ENCODE measurements at regions of chr10 and their contacts with region 1.

Region 1: GRCh38 chr10:118754720-118755480 is at the start of gene CACUL1:
- DNase-seq: peak; percentile 100
- H3K4me3 Mint-ChIP-seq: peak within 1 kb of the TSS; percentile 87
- H3K27ac Mint-ChIP-seq: peak within 1 kb of the TSS; percentile 86
- H3K4me1 Mint-ChIP-seq: peaks cover 26% of the 10 kb centered on the region
- H3K27me3 Mint-ChIP-seq: peaks cover 15% of the 10 kb centered on the region
- total RNA-seq, gene CACUL1: 30.1 and 32.7 TPM in 2 replicates

Region 2: GRCh38 chr10:117653170-117653515 is 1101.8 kb before region 1 on chr10:
- intact Hi-C with region 1: loop called (anchors 2 kb)
- DNase-seq: peak; percentile 65
- H3K4me3 Mint-ChIP-seq: peak overlapping the region; percentile 11
- H3K27ac Mint-ChIP-seq: peak overlapping the region; percentile 83
- H3K4me1 Mint-ChIP-seq: peaks cover 38% of the 10 kb centered on the region
- H3K27me3 Mint-ChIP-seq: peaks cover 3% of the 10 kb centered on the region

Region 3: DNA sequence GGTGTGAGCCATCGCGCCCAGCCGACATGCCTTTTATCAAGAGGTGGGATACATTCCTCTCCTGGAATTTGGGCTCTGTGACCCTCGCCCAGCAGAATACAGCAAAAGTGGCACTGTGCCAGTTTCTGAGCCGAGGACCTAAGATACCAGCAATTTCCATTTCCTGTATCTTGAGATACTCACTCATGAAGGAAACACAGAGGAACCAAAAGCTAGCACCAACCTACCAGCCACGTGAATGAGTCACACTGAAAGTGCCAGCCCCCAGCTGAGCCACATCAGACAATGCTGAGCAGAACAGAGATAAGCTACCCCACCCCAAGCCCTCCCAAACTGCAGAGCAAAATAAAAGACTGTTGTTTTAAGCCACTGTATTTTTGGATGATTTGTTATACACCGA is 56.5 kb before region 1 on chr10:
- intact Hi-C with region 1: loop called (anchors 1 kb)
- DNase-seq: peak; percentile 74
- H3K4me3 Mint-ChIP-seq: peak overlapping the region; percentile 34
- H3K27ac Mint-ChIP-seq: no peak overlapping the region
- H3K4me1 Mint-ChIP-seq: peaks cover 33% of the 10 kb centered on the region
- H3K27me3 Mint-ChIP-seq: no peaks in the 10 kb centered on the region

Region 4: GRCh38 chr10:118927321-118927720 is 172.4 kb after region 1 on chr10:
- intact Hi-C with region 1: no loop called
- DNase-seq: no peak
- H3K4me3 Mint-ChIP-seq: no peak overlapping the region
- H3K27ac Mint-ChIP-seq: no peak overlapping the region
- H3K4me1 Mint-ChIP-seq: no peaks in the 10 kb centered on the region
- H3K27me3 Mint-ChIP-seq: peaks cover 15% of the 10 kb centered on the region

Region 5: DNA sequence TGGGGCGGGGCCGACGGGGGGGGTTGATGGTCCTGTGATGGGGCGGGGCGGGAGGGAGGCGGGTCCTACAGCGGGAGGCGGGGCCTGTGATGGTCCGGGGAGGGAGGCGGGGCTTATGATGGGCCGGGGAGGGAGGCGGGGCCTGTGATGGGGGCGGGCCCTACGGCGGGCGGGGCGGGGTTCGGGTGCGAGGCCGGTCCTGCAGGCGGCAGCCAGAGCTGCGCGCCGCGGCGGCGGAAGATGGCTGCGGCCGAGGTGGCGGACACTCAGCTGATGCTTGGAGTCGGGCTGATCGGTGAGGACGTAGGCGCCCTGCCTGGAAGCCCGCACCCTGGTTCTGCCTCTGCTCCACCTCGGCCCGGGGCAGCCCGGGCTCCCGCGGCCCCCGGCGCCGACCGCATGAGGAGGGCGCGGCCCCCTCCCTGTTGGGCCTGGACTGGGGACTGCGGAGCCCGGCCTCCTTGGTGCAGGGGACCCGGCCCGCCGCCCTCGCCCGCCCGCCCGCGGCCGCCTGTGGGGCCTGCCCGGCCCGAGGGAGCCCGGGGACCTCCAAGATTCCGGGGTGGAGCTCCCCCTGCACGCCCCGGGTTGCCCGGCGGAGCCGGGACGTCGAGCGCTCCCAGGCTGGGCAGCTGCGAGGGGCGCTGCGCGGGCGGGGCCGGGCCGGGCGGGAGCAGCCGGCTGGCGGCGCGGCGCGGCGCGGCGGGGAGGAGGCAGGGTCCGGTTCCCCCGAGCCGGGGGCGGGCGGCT is 349.2 kb after region 1 on chr10 and contains the start of gene DENND10:
- intact Hi-C with region 1: loop called (anchors 5 kb)
- DNase-seq: peak; percentile 68
- H3K4me3 Mint-ChIP-seq: peak within 1 kb of the TSS; percentile 87
- H3K27ac Mint-ChIP-seq: peak within 1 kb of the TSS; percentile 58
- H3K4me1 Mint-ChIP-seq: peaks cover 22% of the 10 kb centered on the region
- H3K27me3 Mint-ChIP-seq: no peaks in the 10 kb centered on the region
- total RNA-seq, gene DENND10: 20.1 and 25.4 TPM in 2 replicates

Region 6: DNA sequence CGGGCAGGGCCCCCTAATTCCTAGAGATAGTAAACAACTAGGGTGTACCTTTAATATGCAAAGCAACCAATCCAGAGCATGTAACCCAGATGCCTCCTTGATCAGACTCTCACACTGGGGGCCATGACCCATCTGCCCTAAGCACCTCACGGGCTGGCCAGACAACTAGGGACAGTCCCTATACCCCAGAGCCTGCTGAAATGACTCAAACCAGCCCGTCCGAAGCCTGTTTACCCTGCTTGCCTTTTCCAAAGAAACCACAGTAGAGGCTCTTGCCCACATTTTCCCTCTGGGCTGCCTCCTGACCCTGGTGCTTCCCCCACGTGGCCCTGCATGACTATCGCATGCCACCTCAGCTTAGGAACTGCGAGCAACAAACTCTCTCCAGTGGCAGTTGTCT is 741.4 kb after region 1 on chr10:
- intact Hi-C with region 1: loop called (anchors 10 kb)
- DNase-seq: no peak
- H3K4me3 Mint-ChIP-seq: peak overlapping the region; percentile 64
- H3K27ac Mint-ChIP-seq: peak overlapping the region; percentile 87
- H3K4me1 Mint-ChIP-seq: peaks cover 79% of the 10 kb centered on the region
- H3K27me3 Mint-ChIP-seq: no peaks in the 10 kb centered on the region

Region 7: DNA sequence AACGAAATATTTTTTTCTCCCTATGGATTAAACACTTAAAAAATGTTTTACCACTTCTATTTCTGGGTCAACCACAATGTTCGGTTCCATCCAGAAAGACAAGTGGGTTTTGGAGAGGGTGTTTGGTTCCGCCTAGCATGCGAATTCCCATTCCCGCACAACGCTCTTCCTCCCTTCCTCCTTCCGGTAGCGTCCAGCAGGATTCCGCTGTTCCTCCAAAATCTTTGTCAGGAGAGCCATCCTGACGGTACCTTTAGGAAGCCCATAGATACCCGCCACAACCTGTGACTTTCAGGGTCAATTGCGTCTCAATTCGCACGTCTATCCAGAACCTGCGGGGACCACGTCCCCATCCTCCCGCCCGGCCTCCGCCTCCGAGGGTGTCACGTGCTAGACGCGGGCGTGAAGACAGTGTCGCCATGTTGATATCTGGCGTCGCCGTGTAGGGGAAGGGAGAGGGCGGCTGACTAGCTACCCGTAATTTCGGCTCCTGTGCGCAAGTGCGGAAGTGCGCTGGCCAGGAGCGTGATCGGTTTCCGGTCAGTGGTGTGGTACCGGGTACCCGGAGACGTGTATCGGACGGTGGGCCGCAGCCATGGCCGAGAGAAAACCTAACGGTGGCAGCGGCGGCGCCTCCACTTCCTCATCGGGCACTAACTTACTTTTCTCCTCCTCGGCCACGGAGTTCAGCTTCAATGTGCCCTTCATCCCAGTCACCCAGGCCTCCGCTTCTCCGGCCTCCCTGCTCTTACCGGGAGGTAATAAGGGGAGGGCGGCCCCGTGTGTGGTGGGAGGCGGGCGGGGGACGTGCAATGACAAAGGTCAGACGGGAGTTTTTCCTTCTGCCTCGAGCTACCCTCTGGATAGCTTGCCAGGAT is 1137.5 kb after region 1 on chr10 and contains the start of gene SEC23IP:
- intact Hi-C with region 1: loop called (anchors 1 kb)
- DNase-seq: peak; percentile 92
- H3K4me3 Mint-ChIP-seq: peak within 1 kb of the TSS; percentile 92
- H3K27ac Mint-ChIP-seq: peak within 1 kb of the TSS; percentile 96
- H3K4me1 Mint-ChIP-seq: peaks cover 53% of the 10 kb centered on the region
- H3K27me3 Mint-ChIP-seq: peaks cover 4% of the 10 kb centered on the region
- total RNA-seq, gene SEC23IP: 79.7 and 91.7 TPM in 2 replicates

Measured in activated T-helper 1 cell treated with anti-CD3 and anti-CD28 coated beads, Interleukin-12 subunit alpha, Interleukin-12 subunit beta, Interleukin-2, Interleukin-4 antibody, amounts not matched to agents 30 ng/mL and 10 ng/mL and 1 ng/mL, durations not matched to agents 14 hours and 24 hours and 36 hours (primary cell).